Prostate gland (tissue), 2 donors: ENCODE measurements at regions of chr12 and their contacts with region 1.

Region 1: DNA sequence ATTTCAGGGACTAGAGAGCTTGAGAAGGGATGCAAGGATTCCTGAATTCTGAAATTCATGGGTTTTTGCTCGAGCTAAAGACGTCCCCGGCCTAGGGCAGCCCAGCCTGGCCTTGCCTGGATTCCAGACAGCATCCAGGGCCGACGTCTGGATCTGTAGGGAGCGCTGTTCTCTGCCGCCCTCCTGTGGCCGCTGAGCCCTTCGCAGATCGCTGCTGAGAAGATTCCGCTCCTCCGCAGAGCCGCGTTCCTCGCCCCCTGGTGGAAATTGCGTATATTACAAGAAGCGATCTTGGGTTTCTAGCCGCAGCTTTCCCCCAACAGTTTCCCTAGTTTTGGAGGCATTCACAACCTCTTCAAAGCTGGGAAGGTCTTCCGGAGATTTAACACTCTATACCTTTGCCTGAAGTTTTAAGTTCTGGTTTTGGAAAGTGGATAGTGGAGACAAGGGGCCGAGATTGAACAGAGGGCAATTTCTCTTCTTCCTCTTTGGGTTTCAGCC is 5.1 kb downstream of the CISTR start:
- DNase-seq: peak; percentile 91
- H3K4me3 ChIP-seq: no peak overlapping the region
- H3K27ac ChIP-seq: no peak overlapping the region
- H3K4me1 ChIP-seq: peaks cover 10% of the 10 kb centered on the region
- H3K27me3 ChIP-seq: peaks cover 5% of the 10 kb centered on the region
- CTCF ChIP-seq: peak; percentile 95 to 100 (median 98)
- POLR2A ChIP-seq: no peak

Region 2: GRCh38 chr12:53701518-53702260 is 45.0 kb before region 1 on chr12:
- intact Hi-C with region 1: loop called (anchors 2 kb)
- DNase-seq: peak; percentile 80
- H3K4me3 ChIP-seq: no peak overlapping the region
- H3K27ac ChIP-seq: no peak overlapping the region
- H3K4me1 ChIP-seq: no peaks in the 10 kb centered on the region
- H3K27me3 ChIP-seq: no peaks in the 10 kb centered on the region
- CTCF ChIP-seq: peak; percentile 69 to 94 (median 92)
- POLR2A ChIP-seq: no peak